GM12878 (cell line): ENCODE measurements at regions of chr5 and their contacts with region 1.

Region 1: GRCh38 chr5:87347272-87347671 is 65.5 kb downstream of the CCNH start:
- DNase-seq: no peak
- ATAC-seq: peak; percentile 79
- H3K4me3 ChIP-seq: no peak overlapping the region
- H3K27ac ChIP-seq: peak overlapping the region; percentile 6; the same call in 1 of the 2 replicates
- H3K4me1 ChIP-seq: peaks cover 7% of the 10 kb centered on the region; the same call in 1 of the 2 replicates
- H3K27me3 ChIP-seq: no peaks in the 10 kb centered on the region
- CTCF ChIP-seq: no peak
- EP300 ChIP-seq: no peak
- POLR2A ChIP-seq: no peak
- RAD21 ChIP-seq: no peak

Region 2: DNA sequence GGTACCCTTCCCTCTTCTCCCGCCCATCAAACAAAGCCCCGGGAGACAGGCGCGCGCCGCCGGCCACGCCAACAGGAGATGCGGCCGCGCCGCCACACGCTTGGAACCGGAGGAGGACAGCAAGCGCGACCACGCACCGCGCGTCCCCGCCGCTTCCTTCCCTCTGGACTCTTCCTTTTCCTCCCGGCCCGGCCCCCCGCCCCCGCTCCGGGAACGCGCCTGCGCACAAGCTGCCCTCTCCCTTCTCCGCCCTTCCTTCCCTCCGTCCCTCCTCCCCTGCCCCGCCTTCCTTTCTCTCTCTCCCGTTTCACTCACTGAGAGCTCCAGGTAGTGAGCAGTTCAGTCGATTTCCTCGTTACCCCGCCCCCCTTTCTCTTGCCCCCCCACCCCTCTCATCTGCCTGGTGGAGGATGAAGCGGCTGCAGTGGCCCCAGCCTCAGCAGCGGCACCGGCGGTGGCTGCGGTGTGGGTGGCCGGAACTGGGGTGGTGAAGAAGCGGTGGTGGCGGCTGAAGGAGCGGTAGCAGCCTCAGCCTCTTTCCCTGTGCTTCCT is 79.6 kb before region 1 on chr5 and contains the start of gene RASA1:
- CTCF ChIA-PET with region 1: no interaction called
- POLR2A ChIA-PET with region 1: no interaction called
- RAD21 ChIA-PET with region 1: interaction called, 19 read pairs
- SMC1A ChIA-PET with region 1: interaction called, 3 read pairs
- in situ Hi-C with region 1: no loop called
- intact Hi-C with region 1: loop called (anchors 2 kb)
- DNase-seq: peak; percentile 76
- ATAC-seq: peak; percentile 74
- H3K4me3 ChIP-seq: peak within 1 kb of the TSS; percentile 98
- H3K27ac ChIP-seq: peak within 1 kb of the TSS; percentile 94
- H3K4me1 ChIP-seq: no peaks in the 10 kb centered on the region
- H3K27me3 ChIP-seq: no peaks in the 10 kb centered on the region
- CTCF ChIP-seq: no peak
- EP300 ChIP-seq: no peak
- POLR2A ChIP-seq: peak; percentile 91
- RAD21 ChIP-seq: peak; percentile 30
- polyA plus RNA-seq, gene RASA1: 7.8 to 12.0 TPM